Activated B cell treated with CpG ODN at 0.5 μM for 24 hours (primary cell): ENCODE measurements at regions of chr7 and their contacts with region 1.

Region 1: GRCh38 chr7:116173051-116174028 is 37.0 kb upstream of the TES start:
- DNase-seq: no peak
- ATAC-seq: peak; percentile 49
- H3K4me3 Mint-ChIP-seq: no peak overlapping the region
- H3K27ac Mint-ChIP-seq: no peak overlapping the region
- H3K4me1 Mint-ChIP-seq: peaks cover 12% of the 10 kb centered on the region
- H3K27me3 Mint-ChIP-seq: no peaks in the 10 kb centered on the region
- CTCF ChIP-seq: no peak

Region 2: GRCh38 chr7:116011584-116011983 is 161.8 kb before region 1 on chr7:
- CTCF ChIA-PET with region 1: no interaction called
- POLR2A ChIA-PET with region 1: no interaction called
- intact Hi-C with region 1: no loop called
- DNase-seq: no peak
- ATAC-seq: no peak
- H3K4me3 Mint-ChIP-seq: no peak overlapping the region
- H3K27ac Mint-ChIP-seq: no peak overlapping the region
- H3K4me1 Mint-ChIP-seq: no peaks in the 10 kb centered on the region
- H3K27me3 Mint-ChIP-seq: no peaks in the 10 kb centered on the region
- CTCF ChIP-seq: no peak

Region 3: GRCh38 chr7:116159711-116160110 is 13.6 kb before region 1 on chr7:
- CTCF ChIA-PET with region 1: interaction called, 10 read pairs
- POLR2A ChIA-PET with region 1: no interaction called
- intact Hi-C with region 1: no loop called
- DNase-seq: no peak
- ATAC-seq: peak; percentile 70
- H3K4me3 Mint-ChIP-seq: peak overlapping the region; percentile 66
- H3K27ac Mint-ChIP-seq: peak overlapping the region; percentile 50
- H3K4me1 Mint-ChIP-seq: peaks cover 65% of the 10 kb centered on the region
- H3K27me3 Mint-ChIP-seq: no peaks in the 10 kb centered on the region
- CTCF ChIP-seq: no peak

Region 4: GRCh38 chr7:116809636-116810266 is 636.4 kb after region 1 on chr7:
- CTCF ChIA-PET with region 1: interaction called, 3 read pairs
- POLR2A ChIA-PET with region 1: no interaction called
- intact Hi-C with region 1: loop called (anchors 1 kb)
- DNase-seq: no peak
- ATAC-seq: peak; percentile 50
- H3K4me3 Mint-ChIP-seq: no peak overlapping the region
- H3K27ac Mint-ChIP-seq: no peak overlapping the region
- H3K4me1 Mint-ChIP-seq: no peaks in the 10 kb centered on the region
- H3K27me3 Mint-ChIP-seq: peaks cover 9% of the 10 kb centered on the region
- CTCF ChIP-seq: peak; percentile 53

Region 5: GRCh38 chr7:117127585-117128168 is 954.3 kb after region 1 on chr7:
- CTCF ChIA-PET with region 1: no interaction called
- POLR2A ChIA-PET with region 1: no interaction called
- intact Hi-C with region 1: loop called (anchors 2 kb)
- DNase-seq: no peak
- ATAC-seq: peak; percentile 40
- H3K4me3 Mint-ChIP-seq: no peak overlapping the region
- H3K27ac Mint-ChIP-seq: no peak overlapping the region
- H3K4me1 Mint-ChIP-seq: no peaks in the 10 kb centered on the region
- H3K27me3 Mint-ChIP-seq: no peaks in the 10 kb centered on the region
- CTCF ChIP-seq: no peak